ENCODE measurements at regions of chr3 and their contacts with region 1.

Region 1: DNA sequence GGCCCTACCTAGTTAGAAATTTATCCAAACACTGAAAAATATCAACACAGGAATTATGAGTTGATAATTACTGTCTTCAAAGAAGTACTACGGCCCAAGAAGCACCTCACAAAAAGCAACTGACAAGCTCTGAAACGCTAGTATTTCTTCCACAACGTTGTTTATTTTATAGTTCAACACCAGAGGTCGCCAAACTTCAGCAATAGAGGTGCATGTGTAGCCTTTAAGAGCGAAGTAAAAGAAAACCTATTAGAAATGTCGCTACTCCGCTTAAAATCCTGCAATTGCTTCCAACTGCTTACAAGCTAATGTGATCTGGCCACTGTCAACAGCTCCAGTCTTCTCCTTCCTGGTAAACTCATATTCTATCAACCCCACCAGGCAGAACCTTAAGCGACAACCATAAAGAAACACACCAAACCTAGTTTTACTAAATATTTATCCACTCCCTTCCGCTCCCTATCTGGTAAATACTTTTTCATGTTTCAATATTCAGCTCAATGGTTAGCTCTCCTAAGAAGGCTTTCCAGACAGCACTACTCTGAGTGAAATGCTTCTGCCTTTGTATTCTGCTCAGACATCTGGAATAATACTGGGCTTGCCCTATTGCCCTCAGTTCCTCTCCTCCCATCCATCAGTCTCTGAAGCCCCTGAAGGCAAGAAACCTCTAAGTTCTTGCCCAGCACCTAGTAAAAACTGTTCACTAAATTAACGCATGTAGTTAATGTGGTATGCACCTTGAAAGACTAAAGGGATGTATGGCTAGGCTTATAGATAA is 110.2 kb downstream of the NR1I2 start:
- DNase-seq: peak; percentile 85
- H3K4me3 Mint-ChIP-seq: no peak overlapping the region
- H3K27ac Mint-ChIP-seq: no peak overlapping the region
- H3K4me1 Mint-ChIP-seq: peaks cover 6% of the 10 kb centered on the region
- H3K27me3 Mint-ChIP-seq: no peaks in the 10 kb centered on the region

Region 2: GRCh38 chr3:119873646-119874045 is 18.5 kb before region 1 on chr3:
- intact Hi-C with region 1: no loop called
- DNase-seq: no peak
- H3K4me3 Mint-ChIP-seq: no peak overlapping the region
- H3K27ac Mint-ChIP-seq: no peak overlapping the region
- H3K4me1 Mint-ChIP-seq: peaks cover 11% of the 10 kb centered on the region
- H3K27me3 Mint-ChIP-seq: no peaks in the 10 kb centered on the region

Region 3: DNA sequence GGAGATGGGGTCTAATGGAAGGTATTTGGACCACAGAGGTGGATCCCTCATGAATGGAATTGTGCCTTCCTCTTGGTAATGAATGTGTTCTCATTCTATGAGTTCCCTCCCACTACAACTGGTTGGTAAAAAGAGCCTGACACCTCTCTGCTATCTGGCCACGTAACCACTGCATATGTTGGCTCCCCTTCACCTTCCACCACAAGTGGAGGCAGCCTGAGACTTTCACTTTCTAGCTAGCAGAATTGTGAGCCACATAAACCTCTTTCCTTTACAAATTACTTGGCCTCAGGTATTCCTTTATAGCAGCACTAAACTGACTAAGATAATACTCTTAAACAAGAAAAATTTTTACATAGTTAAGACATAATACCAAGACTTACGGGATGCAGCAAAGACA is 45.1 kb after region 1 on chr3:
- intact Hi-C with region 1: loop called (anchors 5 kb)
- DNase-seq: peak; percentile 84
- H3K4me3 Mint-ChIP-seq: peak overlapping the region; percentile 60
- H3K27ac Mint-ChIP-seq: peak overlapping the region; percentile 54
- H3K4me1 Mint-ChIP-seq: peaks cover 24% of the 10 kb centered on the region
- H3K27me3 Mint-ChIP-seq: peaks cover 2% of the 10 kb centered on the region

Region 4: DNA sequence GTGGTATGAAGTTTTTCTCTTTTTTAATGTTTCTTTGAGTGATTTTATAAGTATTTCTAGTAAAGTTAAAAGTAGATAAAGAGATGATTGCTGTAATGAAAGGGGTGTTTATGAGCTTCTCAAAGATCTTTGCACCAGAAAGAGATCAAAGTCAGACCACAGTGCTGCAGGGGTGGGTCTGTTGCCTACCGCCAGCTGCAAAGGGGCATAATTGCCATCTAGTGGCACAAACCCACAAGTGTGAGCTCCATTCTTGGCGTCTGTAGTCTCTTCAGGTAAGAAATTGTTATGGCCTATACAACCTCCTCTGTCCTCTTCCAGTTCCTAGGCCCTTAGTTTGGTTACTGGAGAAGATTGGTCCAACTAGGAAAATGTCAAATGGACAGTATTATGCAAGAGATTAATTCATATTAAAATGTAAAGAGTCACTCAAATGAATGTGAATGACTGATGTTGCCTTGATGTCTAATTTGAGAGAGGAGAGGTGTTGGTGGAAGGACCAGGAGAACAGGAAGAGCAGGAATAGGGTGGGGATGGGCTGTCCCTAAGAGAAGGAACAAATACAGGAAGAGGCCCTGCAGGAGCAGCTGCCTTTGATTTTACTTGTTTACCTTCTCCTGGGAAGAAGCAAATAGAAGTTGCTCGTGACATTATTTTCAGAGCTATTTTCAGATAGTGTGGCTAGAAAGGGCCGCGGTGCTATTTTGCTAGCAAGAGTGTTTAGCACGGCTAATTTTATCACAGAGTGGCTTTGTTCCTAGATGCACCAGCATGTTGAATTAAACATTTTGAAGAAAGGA is 255.1 kb after region 1 on chr3:
- intact Hi-C with region 1: loop called (anchors 1 kb)
- DNase-seq: peak; percentile 77
- H3K4me3 Mint-ChIP-seq: no peak overlapping the region
- H3K27ac Mint-ChIP-seq: no peak overlapping the region
- H3K4me1 Mint-ChIP-seq: peaks cover 12% of the 10 kb centered on the region
- H3K27me3 Mint-ChIP-seq: no peaks in the 10 kb centered on the region

Region 5: DNA sequence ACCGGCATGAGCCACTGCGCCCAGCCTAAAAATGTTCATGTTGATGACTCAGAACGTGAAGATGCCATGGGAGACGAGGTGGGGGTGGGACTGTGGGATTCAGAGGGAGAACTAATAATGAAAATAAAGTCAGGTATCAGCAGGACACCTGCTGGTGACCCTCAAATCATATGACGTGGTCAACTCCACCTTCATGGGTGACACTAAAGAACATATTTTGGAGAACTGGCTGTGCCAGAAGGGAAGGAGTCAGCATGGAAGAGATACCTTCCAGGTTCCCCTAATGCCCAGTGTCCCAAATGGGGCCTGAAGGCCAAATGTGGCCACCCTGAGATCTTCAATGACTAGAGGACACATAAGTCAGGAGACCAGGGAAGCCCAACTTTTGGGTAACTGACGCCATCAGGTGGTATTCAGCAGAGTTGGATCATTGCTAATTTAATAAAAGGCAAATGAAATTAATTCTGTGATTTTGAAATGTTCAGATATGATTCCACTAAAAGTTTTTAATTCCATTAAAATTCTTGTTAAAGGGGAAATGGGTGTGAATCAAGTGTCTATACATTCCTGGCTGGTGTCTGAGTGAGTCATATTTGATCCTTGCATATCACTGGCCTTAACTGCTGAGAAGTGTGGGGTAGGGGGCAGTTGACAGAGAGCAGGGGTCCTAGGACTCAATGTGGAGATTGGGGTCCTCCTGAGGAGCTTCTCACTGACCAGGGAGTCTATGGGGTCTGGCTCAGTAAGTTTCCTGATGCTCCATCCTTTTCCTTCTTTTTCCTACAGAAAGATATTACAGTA is 290.8 kb after region 1 on chr3:
- intact Hi-C with region 1: loop called (anchors 1 kb)
- DNase-seq: no peak
- H3K4me3 Mint-ChIP-seq: no peak overlapping the region
- H3K27ac Mint-ChIP-seq: no peak overlapping the region
- H3K4me1 Mint-ChIP-seq: no peaks in the 10 kb centered on the region
- H3K27me3 Mint-ChIP-seq: peaks cover 11% of the 10 kb centered on the region

Region 6: GRCh38 chr3:120198305-120198878 is 306.3 kb after region 1 on chr3:
- intact Hi-C with region 1: loop called (anchors 1 kb)
- DNase-seq: no peak
- H3K4me3 Mint-ChIP-seq: no peak overlapping the region
- H3K27ac Mint-ChIP-seq: no peak overlapping the region
- H3K4me1 Mint-ChIP-seq: no peaks in the 10 kb centered on the region
- H3K27me3 Mint-ChIP-seq: peaks cover 4% of the 10 kb centered on the region

Region 7: GRCh38 chr3:120417272-120417911 is 525.3 kb after region 1 on chr3:
- intact Hi-C with region 1: loop called (anchors 1 kb)
- DNase-seq: peak; percentile 95
- H3K4me3 Mint-ChIP-seq: peak overlapping the region; percentile 90
- H3K27ac Mint-ChIP-seq: peak overlapping the region; percentile 46
- H3K4me1 Mint-ChIP-seq: peaks cover 14% of the 10 kb centered on the region
- H3K27me3 Mint-ChIP-seq: peaks cover 5% of the 10 kb centered on the region

Measured in activated CD4-positive, alpha-beta T cell treated with anti-CD3 and anti-CD28 coated beads, Interleukin-2, amount 10 ng/mL, durations not matched to agents 24 days and 14 days (primary cell).